Left cardiac atrium (tissue), 4 donors: ENCODE measurements at regions of chr6 and their contacts with region 1.

Region 1: GRCh38 chr6:83403191-83403590 is 27.7 kb downstream of the ME1 start:
- DNase-seq: no peak
- ATAC-seq: no peak

Region 2: DNA sequence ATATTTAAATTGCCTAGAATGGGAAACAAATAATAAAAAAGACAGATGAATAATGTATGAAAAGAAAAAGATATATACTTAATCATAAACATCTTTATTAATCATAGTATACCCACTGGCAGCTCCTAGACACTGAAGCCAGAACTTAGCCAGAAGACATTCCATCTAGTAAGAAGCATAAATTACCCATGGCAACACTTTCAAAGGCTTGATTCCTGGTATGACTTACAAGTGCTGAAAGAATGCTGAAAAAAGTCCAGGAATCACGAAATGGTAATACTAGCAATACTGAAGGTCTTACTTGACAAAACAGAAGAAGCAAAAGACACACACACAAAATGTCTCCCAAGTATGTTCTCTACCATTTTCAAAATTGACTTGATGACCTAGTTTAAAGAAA is 172.0 kb before region 1 on chr6:
- intact Hi-C with region 1: loop called in 1 of 2 experiments (anchors 10 kb)
- DNase-seq: no peak
- ATAC-seq: peak in 1 of 2 donors; percentile 56

Region 3: DNA sequence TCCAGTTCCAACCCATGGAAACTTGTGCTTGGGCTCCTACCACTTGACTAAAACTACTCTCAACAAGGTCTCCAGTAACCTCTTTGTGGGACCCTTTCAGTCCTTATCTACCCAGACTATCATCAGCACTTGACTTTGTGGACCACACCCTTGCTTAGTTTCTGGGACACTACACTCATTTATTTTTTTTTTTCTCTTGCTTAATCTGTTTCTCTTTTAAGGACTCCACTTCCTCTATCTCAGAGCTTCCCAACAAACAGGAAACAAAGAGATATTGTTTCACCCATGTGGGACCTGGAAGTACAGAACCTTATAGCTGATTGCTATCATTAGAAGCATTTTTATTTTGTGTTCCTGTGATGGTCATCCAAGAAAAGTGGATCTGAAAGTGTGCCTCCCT is 56.5 kb after region 1 on chr6:
- intact Hi-C with region 1: no loop called
- DNase-seq: no peak
- ATAC-seq: no peak

Region 4: DNA sequence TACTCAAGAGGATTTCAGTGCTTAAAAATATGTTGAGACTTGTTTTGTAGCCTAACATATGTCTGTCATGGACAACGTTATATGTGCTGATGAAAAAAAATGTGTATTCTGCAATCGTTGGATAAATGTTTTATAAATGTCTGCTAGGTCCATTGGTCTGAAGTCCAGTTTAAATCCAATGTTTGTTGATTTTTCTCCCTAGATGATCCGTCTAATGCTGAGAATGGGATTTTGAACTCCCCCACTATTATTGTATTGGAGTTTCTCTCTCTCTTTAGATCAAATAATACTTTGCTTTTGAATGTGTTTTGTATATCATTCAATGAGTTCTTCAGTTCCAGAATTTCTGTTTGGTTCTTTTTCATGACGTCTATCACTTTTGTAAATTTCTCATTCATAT is 501.2 kb after region 1 on chr6:
- intact Hi-C with region 1: no loop called
- DNase-seq: no peak
- ATAC-seq: no peak